GM13976 (cell line): ENCODE measurements at regions of chr1 and their contacts with region 1.

Region 1: GRCh38 chr1:27981145-27981544 is 21.4 kb downstream of the XKR8 start:
- DNase-seq: no peak
- CTCF ChIP-seq: no peak

Region 2: DNA sequence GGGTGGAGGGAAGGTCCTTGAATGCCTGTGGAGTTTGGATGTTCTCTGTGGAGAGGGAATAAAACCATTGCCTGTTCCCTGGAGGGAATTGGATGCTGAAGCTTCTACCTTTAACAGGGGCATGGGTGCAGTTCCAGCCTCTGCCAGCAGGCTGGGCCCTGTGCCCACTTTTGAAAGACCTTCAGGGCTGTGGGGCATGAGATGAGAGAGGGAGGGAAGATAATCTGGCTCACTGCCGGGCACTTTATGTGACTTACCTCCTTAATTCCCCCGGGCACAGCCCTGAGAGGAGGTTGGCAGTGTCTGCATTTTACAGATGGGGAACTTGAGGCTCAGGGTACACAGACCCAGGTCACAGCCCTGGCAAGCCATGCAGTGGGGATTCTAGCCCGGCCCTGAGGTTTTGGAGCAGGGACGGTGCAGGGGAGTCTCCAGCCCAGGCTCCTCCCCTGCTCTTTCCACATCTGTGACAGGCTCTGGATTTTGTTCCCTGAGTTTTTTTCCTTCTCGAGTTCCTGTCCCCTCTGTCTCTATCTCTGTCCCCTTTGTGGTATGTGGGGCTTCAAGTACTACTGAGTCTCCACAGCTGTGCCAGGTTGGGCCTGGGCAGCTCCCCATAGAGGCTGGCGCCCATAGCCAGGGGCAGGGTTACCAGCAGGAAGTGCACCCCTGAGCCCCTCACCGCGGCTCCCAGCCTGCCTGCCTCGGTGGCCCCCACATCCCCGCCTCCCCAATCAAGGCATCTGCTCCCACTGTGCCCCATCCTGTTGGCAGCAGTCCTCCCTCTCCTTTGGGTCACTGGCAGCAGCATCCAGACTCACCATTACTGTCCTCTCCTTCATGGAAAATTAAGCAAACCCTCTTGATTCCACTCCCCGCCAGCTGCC is 122.8 kb before region 1 on chr1:
- in situ Hi-C with region 1: loop called (anchors 10 kb)
- DNase-seq: peak; percentile 85
- CTCF ChIP-seq: peak; percentile 91